ENCODE measurements at regions of chr2 and their contacts with region 1.

Region 1: DNA sequence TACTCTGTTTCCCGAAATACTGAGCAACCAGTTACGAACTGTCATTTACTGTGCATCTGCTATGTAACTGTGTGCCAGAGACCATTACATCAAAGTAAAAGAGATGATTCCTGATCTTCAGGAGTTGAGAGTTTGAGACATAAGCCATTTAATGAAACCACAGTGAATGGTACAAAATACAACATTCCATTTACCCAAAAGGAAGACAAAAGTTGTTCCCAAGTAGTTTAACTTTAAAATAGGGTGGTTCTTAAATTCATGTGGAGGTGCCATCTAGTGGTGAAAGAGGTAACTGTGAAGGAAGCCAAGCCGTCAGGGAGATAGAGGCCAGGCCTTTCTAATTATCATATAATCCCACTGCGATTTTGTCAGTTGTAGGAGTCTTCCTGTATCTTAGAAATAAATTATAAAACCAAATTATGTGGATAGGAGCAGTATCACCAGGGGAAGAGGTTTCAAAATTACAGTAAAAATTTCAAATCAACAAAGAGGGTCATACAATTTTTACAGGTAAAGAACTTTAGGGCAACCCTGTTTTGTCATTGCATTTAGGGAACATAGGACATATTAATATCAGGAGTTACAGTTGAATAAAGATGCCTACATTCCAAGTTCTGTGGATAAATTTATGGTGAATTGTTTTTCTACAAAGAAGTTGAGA is 67.7 kb downstream of the EPAS1 start:
- DNase-seq: peak; percentile 57
- H3K4me3 Mint-ChIP-seq: no peak overlapping the region
- H3K27ac Mint-ChIP-seq: no peak overlapping the region
- H3K4me1 Mint-ChIP-seq: peaks cover 23% of the 10 kb centered on the region
- H3K27me3 Mint-ChIP-seq: no peaks in the 10 kb centered on the region

Region 2: DNA sequence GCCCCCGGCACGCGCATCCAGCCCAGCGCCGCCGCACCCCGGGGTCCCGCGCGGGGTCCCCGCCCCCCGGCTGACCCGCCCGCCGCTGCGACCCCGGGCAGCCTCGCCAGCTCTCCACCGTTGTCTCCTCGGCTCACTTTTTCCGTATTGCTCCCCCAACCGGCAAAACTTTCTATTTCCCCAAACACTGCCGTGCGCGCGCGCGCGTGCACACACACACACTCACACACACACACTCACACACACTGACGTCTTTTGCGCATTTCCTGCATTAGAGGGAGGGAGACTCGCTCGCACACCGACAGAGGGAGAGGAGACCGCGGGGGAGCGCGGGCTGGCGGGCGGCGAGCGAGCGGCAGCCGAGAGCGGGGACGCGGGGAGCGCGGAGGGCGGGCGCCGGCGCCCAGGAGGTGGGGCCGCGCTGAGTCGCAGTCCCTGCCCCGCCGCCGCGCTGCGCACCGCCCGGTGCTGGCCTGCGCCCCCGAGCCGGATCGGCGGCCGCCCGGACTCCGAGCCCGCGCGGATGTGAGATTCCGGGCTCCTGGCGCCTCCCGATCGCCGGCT is 714.0 kb before region 1 on chr2:
- CTCF ChIA-PET with region 1: no interaction called
- intact Hi-C with region 1: loop called (anchors 5 kb)
- DNase-seq: peak; percentile 93
- H3K4me3 Mint-ChIP-seq: peak overlapping the region; percentile 95
- H3K27ac Mint-ChIP-seq: peak overlapping the region; percentile 91
- H3K4me1 Mint-ChIP-seq: peaks cover 22% of the 10 kb centered on the region
- H3K27me3 Mint-ChIP-seq: peaks cover 3% of the 10 kb centered on the region

Region 3: GRCh38 chr2:46010925-46011490 is 353.9 kb before region 1 on chr2:
- CTCF ChIA-PET with region 1: interaction called, 7 read pairs
- intact Hi-C with region 1: loop called (anchors 1 kb)
- DNase-seq: no peak
- H3K4me3 Mint-ChIP-seq: no peak overlapping the region
- H3K27ac Mint-ChIP-seq: no peak overlapping the region
- H3K4me1 Mint-ChIP-seq: no peaks in the 10 kb centered on the region
- H3K27me3 Mint-ChIP-seq: no peaks in the 10 kb centered on the region

Region 4: DNA sequence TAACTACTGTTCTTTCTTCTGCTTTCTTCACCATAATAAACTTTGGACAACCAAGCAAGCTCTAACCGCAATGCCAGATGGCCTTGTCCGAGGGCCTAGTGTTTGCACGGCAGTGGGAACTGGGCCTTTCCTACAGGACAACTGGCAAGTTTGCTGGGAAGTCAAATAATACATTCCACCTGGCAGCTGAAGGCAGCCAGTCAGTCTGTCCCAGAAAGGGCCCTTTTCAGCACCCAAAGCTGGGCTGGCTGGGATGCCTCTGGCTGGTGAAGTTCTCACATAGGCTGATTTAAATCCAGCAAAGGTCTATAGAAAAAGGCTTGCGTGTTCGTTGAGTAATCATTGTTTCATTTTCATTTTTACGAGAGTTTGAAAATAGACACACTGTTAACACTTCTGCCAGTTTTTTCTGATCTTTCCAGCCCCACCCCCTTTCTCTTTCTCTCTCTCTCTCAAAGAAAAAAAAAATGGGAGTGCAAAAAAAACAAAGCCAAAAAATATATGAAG is 177.8 kb before region 1 on chr2:
- CTCF ChIA-PET with region 1: no interaction called
- intact Hi-C with region 1: loop called (anchors 1 kb)
- DNase-seq: peak; percentile 70
- H3K4me3 Mint-ChIP-seq: peak overlapping the region; percentile 35
- H3K27ac Mint-ChIP-seq: peak overlapping the region; percentile 86
- H3K4me1 Mint-ChIP-seq: peaks cover 18% of the 10 kb centered on the region
- H3K27me3 Mint-ChIP-seq: peaks cover 2% of the 10 kb centered on the region

Region 5: DNA sequence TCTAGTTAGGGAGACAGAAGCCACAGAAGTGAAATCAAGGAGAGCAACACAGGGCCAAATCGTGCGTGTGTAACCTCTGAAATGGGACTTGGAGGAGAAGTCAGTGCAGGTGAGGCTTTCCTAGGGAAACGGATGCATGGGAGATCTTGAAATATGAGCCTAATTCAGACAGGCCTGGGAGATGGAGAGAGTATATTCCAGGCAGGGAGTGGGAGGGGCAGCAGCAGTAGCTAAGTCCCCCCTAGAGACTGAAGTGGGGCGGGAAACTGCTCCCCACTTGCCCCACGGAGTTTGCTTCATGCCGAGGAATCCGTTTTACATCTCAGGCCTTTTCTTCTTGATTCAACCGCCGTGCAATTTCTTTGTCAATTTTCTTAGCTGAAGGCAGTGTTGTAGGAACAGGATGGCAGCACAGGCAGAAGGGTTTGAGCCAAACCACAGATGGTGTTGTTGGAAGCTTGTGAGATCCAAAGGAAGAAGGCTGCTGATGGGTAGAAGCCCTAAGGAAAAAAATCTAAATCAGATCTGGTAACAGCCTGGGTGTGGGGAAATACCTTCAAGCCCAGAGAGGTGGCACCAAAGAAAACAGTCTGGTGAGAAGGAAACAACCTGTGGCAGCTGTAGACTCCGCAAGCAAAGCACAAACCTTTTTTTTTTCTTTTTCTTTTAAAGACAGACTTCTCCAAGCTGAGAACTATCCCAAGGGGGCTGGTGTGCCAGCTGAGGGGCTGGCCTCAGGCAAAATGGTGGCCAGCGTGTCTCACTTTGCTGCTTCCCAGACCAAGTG is 27.5 kb before region 1 on chr2:
- CTCF ChIA-PET with region 1: interaction called, 3 read pairs
- intact Hi-C with region 1: loop called (anchors 1 kb)
- DNase-seq: no peak
- H3K4me3 Mint-ChIP-seq: no peak overlapping the region
- H3K27ac Mint-ChIP-seq: no peak overlapping the region
- H3K4me1 Mint-ChIP-seq: peaks cover 8% of the 10 kb centered on the region
- H3K27me3 Mint-ChIP-seq: no peaks in the 10 kb centered on the region

Region 6: DNA sequence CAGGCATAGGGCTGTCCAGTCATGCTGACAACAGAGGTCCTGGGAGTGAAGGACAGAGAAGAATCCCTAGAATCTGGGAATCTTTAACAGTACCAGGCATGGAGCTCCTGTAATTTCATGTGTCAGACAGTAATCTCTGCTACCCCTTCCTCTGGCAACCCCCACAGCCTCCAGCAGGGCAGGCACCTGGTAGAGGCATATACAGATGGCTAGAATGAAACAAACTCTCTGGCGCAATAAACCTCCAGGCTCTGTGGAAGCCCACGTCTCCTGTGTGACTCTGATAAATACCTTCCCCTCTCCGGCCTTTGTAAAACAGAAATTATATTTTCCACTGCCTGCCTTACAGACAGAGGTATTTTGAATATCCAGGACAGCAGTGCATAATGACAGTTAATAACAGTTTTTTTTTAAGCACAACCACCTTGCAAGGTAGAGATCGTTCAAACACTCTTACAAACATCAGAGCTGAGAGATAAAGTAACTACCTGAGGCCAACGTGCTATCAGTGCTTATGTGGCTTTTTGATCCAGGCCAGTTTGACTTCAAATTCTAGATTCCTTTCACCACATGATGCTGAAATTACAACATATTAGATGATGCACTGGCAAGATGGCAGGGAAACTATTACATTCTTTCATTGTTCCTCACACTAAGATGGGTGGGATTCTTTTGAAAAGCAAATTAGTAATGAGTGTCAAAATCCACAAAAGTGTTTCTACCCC is 66.7 kb after region 1 on chr2:
- CTCF ChIA-PET with region 1: no interaction called
- intact Hi-C with region 1: no loop called
- DNase-seq: no peak
- H3K4me3 Mint-ChIP-seq: no peak overlapping the region
- H3K27ac Mint-ChIP-seq: no peak overlapping the region
- H3K4me1 Mint-ChIP-seq: peaks cover 28% of the 10 kb centered on the region
- H3K27me3 Mint-ChIP-seq: no peaks in the 10 kb centered on the region